Activated CD8-positive, alpha-beta memory T cell treated with anti-CD3 and anti-CD28 coated beads, Interleukin-2, amount 10 ng/mL, durations not matched to agents 7 days and 5 days (primary cell): ENCODE measurements at regions of chr2 and their contacts with region 1.

Region 1: GRCh38 chr2:130372055-130372832 is 16.4 kb downstream of the PTPN18 start:
- DNase-seq: peak; percentile 86
- ATAC-seq: peak; percentile 72
- H3K4me3 Mint-ChIP-seq: peak overlapping the region; percentile 96
- H3K27ac Mint-ChIP-seq: peak overlapping the region; percentile 99
- H3K4me1 Mint-ChIP-seq: peaks cover 62% of the 10 kb centered on the region
- H3K27me3 Mint-ChIP-seq: no peaks in the 10 kb centered on the region

Region 2: DNA sequence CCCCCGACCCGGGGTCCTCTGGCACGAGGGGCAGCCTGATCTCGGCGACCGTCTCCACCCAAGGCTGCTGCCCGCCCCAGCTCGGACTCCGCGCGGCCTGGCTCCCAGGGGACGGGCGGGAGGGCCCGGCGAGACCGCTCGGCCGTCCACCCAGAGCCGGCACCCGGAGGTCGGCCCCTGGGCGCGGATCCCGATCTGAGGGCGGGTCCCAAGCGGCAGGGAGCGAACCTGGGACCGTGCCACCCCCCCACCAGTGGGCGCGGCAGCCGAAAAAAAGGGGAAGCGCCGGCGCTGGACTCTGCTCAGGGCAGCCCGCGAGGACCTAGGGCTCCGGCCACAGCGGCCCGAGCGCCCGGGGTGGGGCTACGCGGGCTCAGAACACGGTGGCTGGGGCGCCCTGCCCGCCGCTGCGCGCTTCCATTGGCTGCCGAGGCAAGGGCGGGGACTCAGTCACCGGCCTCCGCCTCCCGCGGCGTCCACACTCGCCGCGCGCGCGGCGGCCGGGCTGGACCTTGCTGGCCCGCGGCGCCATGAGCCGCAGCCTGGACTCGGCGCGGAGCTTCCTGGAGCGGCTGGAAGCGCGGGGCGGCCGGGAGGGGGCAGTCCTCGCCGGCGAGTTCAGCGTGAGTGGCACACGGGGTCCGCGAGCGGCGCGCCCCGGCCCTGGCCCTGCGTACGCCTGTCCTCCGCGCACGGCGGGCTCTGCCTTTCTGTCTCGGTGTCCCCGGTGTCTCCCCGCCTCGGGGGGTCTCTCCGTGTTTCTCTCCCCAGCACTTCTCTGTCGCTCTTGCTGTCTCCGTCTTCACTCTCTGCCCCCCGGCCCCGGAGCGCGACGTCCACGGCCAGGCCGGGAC is 16.4 kb before region 1 on chr2 and contains the start of gene PTPN18:
- CTCF ChIA-PET with region 1: interaction called, 12 read pairs
- DNase-seq: peak; percentile 72
- ATAC-seq: peak; percentile 97
- H3K4me3 Mint-ChIP-seq: peak within 1 kb of the TSS; percentile 77
- H3K27ac Mint-ChIP-seq: peak within 1 kb of the TSS; percentile 21
- H3K4me1 Mint-ChIP-seq: peaks cover 13% of the 10 kb centered on the region
- H3K27me3 Mint-ChIP-seq: no peaks in the 10 kb centered on the region
- total RNA-seq, gene PTPN18: 82.3 to 90.5 TPM

Region 3: DNA sequence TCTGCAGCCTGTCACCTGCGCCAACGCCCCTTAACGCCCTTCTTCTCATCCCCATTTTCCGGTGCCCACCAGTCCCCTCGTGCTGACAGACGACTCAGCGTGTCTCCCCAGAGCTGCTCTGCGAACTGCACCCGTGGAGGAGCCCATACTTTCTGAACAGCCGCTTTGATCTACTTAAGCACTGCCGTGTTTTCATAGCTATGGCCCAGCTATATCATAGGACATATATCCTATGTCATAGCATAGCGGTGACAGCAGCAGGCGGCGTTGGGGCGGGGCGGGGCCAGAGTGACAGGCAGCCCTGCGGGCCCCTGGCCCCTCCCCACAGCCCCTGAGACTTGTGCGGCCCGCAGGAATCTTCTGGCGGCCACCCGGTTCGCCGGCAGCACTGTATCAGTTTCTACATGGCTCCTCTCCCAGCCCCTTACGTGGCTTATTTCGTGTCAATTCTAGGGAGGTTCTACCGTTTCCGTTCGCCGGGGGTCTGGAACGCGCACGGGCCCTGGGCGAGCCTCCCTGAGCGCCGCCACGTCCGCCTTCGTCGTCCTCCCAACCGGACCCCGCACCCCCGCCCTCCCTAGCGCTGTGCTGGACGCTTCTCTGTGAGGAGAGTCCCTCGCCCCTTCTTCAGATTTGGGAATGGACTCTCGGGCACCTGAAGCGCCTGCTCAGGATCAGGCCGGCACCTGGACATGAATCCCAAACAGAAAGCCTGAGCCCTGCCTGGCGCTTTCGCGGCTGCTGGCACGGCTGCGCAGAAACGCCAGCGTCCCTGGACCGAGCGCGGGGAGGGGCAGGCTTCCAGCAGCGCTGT is 19.0 kb after region 1 on chr2:
- CTCF ChIA-PET with region 1: interaction called, 15 read pairs
- DNase-seq: peak; percentile 83
- ATAC-seq: peak; percentile 99
- H3K4me3 Mint-ChIP-seq: peak overlapping the region; percentile 75
- H3K27ac Mint-ChIP-seq: peak overlapping the region; percentile 75
- H3K4me1 Mint-ChIP-seq: peaks cover 15% of the 10 kb centered on the region
- H3K27me3 Mint-ChIP-seq: peaks cover 10% of the 10 kb centered on the region